Cardiac septum (tissue), 1 donor: ENCODE measurements at regions of chr21 and their contacts with region 1.

Region 1: DNA sequence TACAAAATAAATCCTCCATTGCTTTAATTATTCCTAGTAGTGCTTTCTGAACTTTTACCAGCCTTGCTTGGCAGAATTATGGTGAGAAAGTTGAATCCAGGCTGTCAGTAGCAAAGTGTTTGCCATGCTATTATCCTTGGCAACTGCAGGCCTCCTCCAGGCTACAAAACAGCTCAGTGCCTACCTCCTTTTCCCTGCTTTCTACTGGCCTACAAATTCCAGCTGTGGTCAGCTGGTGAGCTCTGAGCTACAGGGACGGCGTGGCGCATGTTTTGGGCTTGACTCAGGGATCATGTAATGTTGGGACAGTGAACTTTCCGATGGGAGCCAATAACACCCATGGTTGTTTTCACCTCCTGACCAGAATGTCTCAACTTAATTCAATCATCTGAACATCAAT is 456.1 kb upstream of the ADAMTS5 start:
- DNase-seq: no peak

Region 2: DNA sequence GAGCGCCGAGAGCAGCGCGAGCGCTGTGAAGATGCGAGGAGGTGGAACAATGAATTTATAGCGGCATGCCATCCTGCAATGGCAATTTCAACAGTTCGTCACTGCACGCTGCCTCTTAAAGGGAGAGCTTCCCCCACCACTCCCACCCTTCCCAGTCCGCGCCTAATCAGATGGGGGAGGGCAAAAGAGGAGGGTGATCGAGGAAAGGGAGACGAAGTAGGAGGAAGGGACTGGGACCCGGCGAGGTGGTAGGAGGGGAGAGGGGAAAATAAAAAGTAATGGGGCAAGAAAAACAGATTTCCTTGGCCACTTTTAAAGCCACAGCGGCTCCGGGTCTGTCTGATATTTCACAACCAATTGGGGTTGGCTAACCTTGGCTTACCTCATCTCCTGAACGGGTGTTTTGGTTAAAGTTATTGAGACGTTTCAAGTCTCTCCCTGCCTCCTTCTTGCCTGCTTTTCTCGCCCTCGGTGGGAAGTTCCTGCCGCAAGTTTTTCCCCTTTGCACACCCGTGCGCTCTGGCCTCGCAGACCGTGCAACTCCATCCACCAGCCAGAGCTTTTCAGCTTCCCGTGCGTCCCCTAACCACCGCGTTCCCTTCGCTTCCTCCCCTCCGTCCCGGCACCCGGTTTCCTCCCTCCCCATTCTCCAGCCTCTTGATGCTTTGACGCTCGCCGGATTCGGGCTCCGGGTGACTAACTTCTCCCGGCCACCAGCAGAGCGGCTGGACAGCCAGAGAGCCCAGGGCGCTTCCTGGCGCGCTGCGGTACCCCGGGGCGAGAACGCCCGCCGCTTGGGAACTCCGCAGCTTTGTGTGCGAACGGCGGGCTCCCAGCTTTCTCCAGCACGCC is 455.8 kb before region 1 on chr21 and contains the start of gene ADAMTS5:
- intact Hi-C with region 1: loop called (anchors 10 kb)
- DNase-seq: peak; percentile 84
- total RNA-seq, gene ADAMTS5: 4.0 TPM

Region 3: DNA sequence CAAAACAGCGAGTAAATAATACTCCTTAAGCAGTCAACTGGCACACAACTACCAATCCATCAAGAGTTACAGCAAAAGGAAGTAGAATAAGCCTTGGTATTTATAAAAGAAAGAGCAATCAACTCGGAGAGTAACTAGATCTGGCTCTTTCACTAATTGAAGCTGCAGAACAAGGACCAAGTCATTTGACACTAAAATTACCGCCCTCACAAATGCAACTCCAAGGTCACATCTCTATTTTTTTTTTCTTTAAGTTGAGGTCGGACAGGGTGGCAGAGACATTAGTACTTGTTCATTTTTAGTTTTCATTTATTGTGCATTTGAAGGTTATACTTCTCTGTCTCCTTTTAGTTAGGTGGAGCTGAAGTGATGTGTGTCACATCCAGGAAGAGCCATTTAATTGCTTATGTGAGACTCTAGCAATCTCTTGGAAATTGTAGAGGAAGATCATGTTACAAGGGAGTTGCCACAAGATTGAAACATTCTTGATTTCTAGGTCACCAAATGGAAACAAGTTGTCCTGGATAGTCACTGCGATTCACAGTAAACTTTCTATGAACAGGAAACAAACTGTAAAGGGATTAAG is 318.1 kb before region 1 on chr21:
- intact Hi-C with region 1: no loop called
- DNase-seq: no peak

Region 4: DNA sequence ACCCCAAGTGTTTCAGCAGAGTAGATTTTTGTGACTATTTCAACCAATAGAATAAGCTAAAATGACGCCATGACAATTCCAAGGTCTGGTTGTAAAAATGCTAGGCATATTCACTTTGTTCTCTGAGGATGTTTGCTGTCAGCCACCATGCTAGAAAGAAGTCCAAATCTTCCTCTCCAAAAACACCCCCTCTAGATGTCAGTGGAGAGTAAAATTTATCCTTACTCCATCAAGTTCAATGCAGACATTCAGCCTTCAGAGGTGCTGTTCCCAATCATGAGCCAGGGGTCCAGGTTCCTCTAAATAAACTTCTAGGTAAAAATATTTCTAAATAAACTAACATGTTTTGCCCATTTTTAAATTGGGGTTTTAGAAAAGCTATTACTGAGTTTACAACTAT is 60.8 kb before region 1 on chr21:
- intact Hi-C with region 1: no loop called
- DNase-seq: no peak